Caco-2 (cell line): ENCODE measurements at regions of chr17 and their contacts with region 1.

Region 1: DNA sequence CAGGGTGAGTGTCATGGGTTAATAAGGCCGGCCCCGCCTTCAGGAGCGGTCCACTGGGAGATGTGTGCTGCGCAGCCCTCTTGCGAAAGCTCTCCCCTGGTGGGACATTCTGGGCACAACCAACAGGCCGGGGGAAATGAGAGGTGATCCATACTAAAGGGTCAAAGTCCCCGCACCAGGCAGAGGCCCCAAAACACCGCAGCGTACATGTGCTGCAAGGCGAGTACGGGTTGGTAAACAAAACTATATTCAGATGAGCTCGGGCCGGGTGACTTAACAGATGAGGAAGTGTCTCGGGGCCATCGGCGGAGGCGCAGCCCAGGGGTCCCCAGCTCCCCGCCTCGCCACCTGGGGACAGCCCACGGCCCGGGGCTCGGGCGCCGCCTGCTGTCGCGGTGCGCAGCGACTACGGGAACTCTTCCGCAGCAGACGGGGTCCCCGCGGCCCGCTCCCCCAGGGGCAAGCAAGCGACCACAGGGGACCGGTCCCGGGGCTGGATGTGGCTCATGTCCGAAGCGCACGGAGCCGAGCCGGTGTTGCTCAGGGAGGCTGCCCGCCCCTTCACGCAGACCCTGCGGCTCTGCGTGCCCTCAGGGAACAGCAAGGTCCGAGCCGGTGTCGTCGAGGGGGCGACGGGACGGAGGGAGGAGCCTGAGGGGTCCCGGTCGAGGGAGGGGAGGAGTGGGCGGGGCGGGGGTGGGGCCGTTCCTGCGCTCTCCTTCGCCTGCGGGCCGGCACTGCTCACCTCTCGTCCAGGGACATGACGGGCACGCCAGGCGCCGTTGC is at the start of gene RAB37:
- DNase-seq: peak; percentile 93 to 97
- H3K4me3 ChIP-seq: peak within 1 kb of the TSS; percentile 91
- H3K4me3 Mint-ChIP-seq: peak within 1 kb of the TSS; percentile 76
- H3K27ac Mint-ChIP-seq: peak within 1 kb of the TSS; percentile 71
- H3K4me1 ChIP-seq: peaks cover 24% of the 10 kb centered on the region
- H3K4me1 Mint-ChIP-seq: peaks cover 6% of the 10 kb centered on the region
- H3K27me3 ChIP-seq: no peaks in the 10 kb centered on the region
- H3K27me3 Mint-ChIP-seq: no peaks in the 10 kb centered on the region
- CTCF ChIP-seq: peak; percentile 56 to 66
- total RNA-seq, gene RAB37: 12.3 and 14.8 TPM in 2 replicates

Region 2: GRCh38 chr17:74605361-74605760 is 131.3 kb before region 1 on chr17:
- CTCF ChIA-PET with region 1: no interaction called
- POLR2A ChIA-PET with region 1: no interaction called
- intact Hi-C with region 1: no loop called
- DNase-seq: no peak
- H3K4me3 ChIP-seq: no peak overlapping the region
- H3K4me3 Mint-ChIP-seq: no peak overlapping the region
- H3K27ac Mint-ChIP-seq: no peak overlapping the region
- H3K4me1 ChIP-seq: no peaks in the 10 kb centered on the region
- H3K4me1 Mint-ChIP-seq: no peaks in the 10 kb centered on the region
- H3K27me3 ChIP-seq: peaks cover 1% of the 10 kb centered on the region; the same call in 1 of the 2 replicates
- H3K27me3 Mint-ChIP-seq: peaks cover 28% of the 10 kb centered on the region
- CTCF ChIP-seq: no peak

Region 3: DNA sequence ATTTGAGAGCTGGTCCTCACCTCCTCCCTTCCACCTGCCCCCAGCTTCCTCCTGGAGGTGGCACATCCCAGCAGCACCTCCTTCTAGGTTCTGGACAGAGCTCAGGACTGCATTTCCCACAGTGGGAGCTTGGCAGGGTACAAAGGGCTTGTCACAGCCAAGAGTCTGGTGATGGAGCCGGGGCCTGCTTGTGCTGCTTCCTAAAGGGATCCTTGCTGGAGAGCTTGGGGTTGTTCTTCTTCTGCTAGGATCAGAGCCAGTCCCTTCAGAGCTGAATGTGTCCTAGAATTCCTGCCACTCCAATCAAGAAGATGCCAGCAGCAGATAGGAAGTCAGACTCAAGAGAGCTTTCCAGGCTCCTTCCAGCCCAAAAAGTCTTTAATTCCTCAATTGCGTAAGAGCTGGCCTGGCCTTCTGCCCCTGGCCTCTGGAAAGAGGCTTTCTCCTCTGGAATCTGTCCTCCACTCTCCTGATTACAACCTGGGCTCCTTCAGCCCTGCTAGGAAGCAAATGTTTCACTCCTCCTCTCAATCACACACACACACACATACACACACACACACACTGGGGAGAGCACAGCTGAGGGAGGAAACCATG is 117.5 kb before region 1 on chr17:
- CTCF ChIA-PET with region 1: no interaction called
- POLR2A ChIA-PET with region 1: no interaction called
- intact Hi-C with region 1: no loop called
- DNase-seq: no peak
- H3K4me3 ChIP-seq: no peak overlapping the region
- H3K4me3 Mint-ChIP-seq: no peak overlapping the region
- H3K27ac Mint-ChIP-seq: no peak overlapping the region
- H3K4me1 ChIP-seq: no peaks in the 10 kb centered on the region
- H3K4me1 Mint-ChIP-seq: no peaks in the 10 kb centered on the region
- H3K27me3 ChIP-seq: no peaks in the 10 kb centered on the region
- H3K27me3 Mint-ChIP-seq: peaks cover 41% of the 10 kb centered on the region
- CTCF ChIP-seq: no peak

Region 4: GRCh38 chr17:74659898-74660297 is 76.8 kb before region 1 on chr17:
- CTCF ChIA-PET with region 1: interaction called, 366 read pairs
- POLR2A ChIA-PET with region 1: interaction called, 25 read pairs
- intact Hi-C with region 1: loop called (anchors 1 kb)
- DNase-seq: no peak
- H3K4me3 ChIP-seq: no peak overlapping the region
- H3K4me3 Mint-ChIP-seq: no peak overlapping the region
- H3K27ac Mint-ChIP-seq: no peak overlapping the region
- H3K4me1 ChIP-seq: peaks cover 7% of the 10 kb centered on the region; the same call in 1 of the 2 replicates
- H3K4me1 Mint-ChIP-seq: no peaks in the 10 kb centered on the region
- H3K27me3 ChIP-seq: no peaks in the 10 kb centered on the region; the same call in 1 of the 2 replicates
- H3K27me3 Mint-ChIP-seq: no peaks in the 10 kb centered on the region
- CTCF ChIP-seq: no peak

Region 5: GRCh38 chr17:74690409-74690825 is 46.3 kb before region 1 on chr17:
- CTCF ChIA-PET with region 1: interaction called, 10 read pairs
- POLR2A ChIA-PET with region 1: no interaction called
- intact Hi-C with region 1: loop called (anchors 2 kb)
- DNase-seq: no peak
- H3K4me3 ChIP-seq: no peak overlapping the region
- H3K4me3 Mint-ChIP-seq: no peak overlapping the region
- H3K27ac Mint-ChIP-seq: no peak overlapping the region
- H3K4me1 ChIP-seq: no peaks in the 10 kb centered on the region
- H3K4me1 Mint-ChIP-seq: no peaks in the 10 kb centered on the region
- H3K27me3 ChIP-seq: peaks cover 2% of the 10 kb centered on the region
- H3K27me3 Mint-ChIP-seq: no peaks in the 10 kb centered on the region
- CTCF ChIP-seq: no peak

Region 6: GRCh38 chr17:74712756-74713155 is 23.9 kb before region 1 on chr17 and contains the start of gene CD300LF:
- CTCF ChIA-PET with region 1: interaction called, 22 read pairs
- POLR2A ChIA-PET with region 1: interaction called, 7 read pairs
- intact Hi-C with region 1: loop called (anchors 1 kb)
- DNase-seq: no peak
- H3K4me3 ChIP-seq: no peak within 1 kb of the TSS
- H3K4me3 Mint-ChIP-seq: no peak within 1 kb of the TSS
- H3K27ac Mint-ChIP-seq: peak within 1 kb of the TSS; percentile 56
- H3K4me1 ChIP-seq: peaks cover 29% of the 10 kb centered on the region
- H3K4me1 Mint-ChIP-seq: peaks cover 17% of the 10 kb centered on the region
- H3K27me3 ChIP-seq: no peaks in the 10 kb centered on the region
- H3K27me3 Mint-ChIP-seq: no peaks in the 10 kb centered on the region
- CTCF ChIP-seq: no peak
- total RNA-seq, gene CD300LF: 2.2 and 2.4 TPM in 2 replicates

Region 7: GRCh38 chr17:74770498-74771318 is 34.0 kb after region 1 on chr17:
- CTCF ChIA-PET with region 1: interaction called, 26 read pairs
- POLR2A ChIA-PET with region 1: interaction called, 5 read pairs
- intact Hi-C with region 1: no loop called
- DNase-seq: peak; percentile 84 to 89
- H3K4me3 ChIP-seq: no peak overlapping the region
- H3K4me3 Mint-ChIP-seq: peak overlapping the region; percentile 24
- H3K27ac Mint-ChIP-seq: peak overlapping the region; percentile 83
- H3K4me1 ChIP-seq: peaks cover 51% of the 10 kb centered on the region
- H3K4me1 Mint-ChIP-seq: peaks cover 51% of the 10 kb centered on the region
- H3K27me3 ChIP-seq: no peaks in the 10 kb centered on the region
- H3K27me3 Mint-ChIP-seq: no peaks in the 10 kb centered on the region
- CTCF ChIP-seq: peak; percentile 86 to 97

Region 8: DNA sequence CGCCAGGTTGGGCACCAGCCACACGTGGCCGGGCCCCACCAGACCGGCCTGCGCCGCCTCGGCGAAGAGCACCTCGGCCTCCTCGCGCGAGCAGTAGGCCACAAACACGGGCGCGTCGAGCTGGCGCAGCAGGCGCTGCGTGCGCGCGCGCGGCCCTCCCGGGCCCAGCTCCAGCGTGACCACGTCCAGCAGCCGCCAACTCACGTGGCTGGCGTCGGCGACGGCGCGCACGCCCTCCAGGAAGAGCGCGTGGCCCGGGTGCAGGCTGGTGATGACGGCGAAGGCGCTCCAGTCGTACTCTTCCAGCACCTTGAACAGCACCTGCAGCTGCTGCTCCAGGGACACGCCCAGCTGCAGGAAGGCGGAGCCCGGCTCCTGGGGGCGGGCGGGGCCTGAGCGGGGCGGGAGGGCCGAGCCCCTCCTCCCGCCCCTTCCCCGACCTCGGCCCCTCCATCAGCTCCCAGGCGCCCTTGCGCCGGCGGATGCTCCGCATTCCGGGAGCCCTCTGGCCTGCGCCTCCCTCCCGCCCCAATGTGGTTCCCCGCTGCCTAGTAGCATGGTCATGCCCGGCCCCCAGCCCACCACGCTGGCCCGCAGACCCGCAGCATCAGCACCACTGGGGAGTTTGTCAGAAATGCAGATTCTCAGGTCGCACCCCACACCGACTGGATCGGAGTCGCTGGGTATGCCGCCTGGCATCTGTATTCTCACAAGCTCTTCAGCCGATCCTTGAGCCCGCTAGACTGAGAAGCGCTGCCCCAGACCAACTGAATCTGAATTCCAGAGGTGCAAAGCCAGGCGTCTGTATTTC is 115.7 kb after region 1 on chr17:
- CTCF ChIA-PET with region 1: interaction called, 11 read pairs
- POLR2A ChIA-PET with region 1: no interaction called
- intact Hi-C with region 1: no loop called
- DNase-seq: peak; percentile 93 to 94
- H3K4me3 ChIP-seq: peak overlapping the region; percentile 62
- H3K4me3 Mint-ChIP-seq: peak overlapping the region; percentile 82
- H3K27ac Mint-ChIP-seq: peak overlapping the region; percentile 63
- H3K4me1 ChIP-seq: peaks cover 8% of the 10 kb centered on the region
- H3K4me1 Mint-ChIP-seq: peaks cover 7% of the 10 kb centered on the region
- H3K27me3 ChIP-seq: 0 out of 2 replicates have a peak, but pooled peaks cover 2% of the 10 kb centered on the region
- H3K27me3 Mint-ChIP-seq: peaks cover 16% of the 10 kb centered on the region
- CTCF ChIP-seq: no peak